ENCODE measurements at regions of chrX and their contacts with region 1.

Region 1: GRCh38 chrX:78139160-78140123 is at the start of gene TAF9B:
- DNase-seq: peak; percentile 50 to 78
- ATAC-seq: peak; percentile 94 to 95
- H3K4me3 ChIP-seq: peak within 1 kb of the TSS; percentile 62 to 79 (median 75)
- H3K27ac ChIP-seq: peak within 1 kb of the TSS; percentile 67 to 81 (median 72)
- H3K4me1 ChIP-seq: no peaks in the 10 kb centered on the region
- H3K27me3 ChIP-seq: peaks cover 0 to 2% (median 0%) of the 10 kb centered on the region in 3 donors
- CTCF ChIP-seq: no peak
- POLR2A ChIP-seq: peak; percentile 22 to 50
- total RNA-seq, gene TAF9B: 16.3 to 24.0 (median 18.5) TPM

Region 2: GRCh38 chrX:78103623-78104446 is 35.6 kb before region 1 on chrX and contains the start of gene PGK1:
- in situ Hi-C with region 1: no loop called
- intact Hi-C with region 1: loop called (anchors 1 kb)
- DNase-seq: peak; percentile 90 to 95
- ATAC-seq: peak; percentile 81 to 90
- H3K4me3 ChIP-seq: peak within 1 kb of the TSS; percentile 81 to 94 (median 88)
- H3K27ac ChIP-seq: peak within 1 kb of the TSS; percentile 91 to 98 (median 98)
- H3K4me1 ChIP-seq: peaks cover 36 to 37% of the 10 kb centered on the region in 2 donors
- H3K27me3 ChIP-seq: no peaks in the 10 kb centered on the region
- CTCF ChIP-seq: no peak
- POLR2A ChIP-seq: peak; percentile 85 to 88
- total RNA-seq, gene PGK1: 220 to 392 (median 310) TPM

Measured in gastrocnemius medialis (tissue), 4 donors.